A549 (cell line): ENCODE measurements at regions of chr5 and their contacts with region 1.

Region 1: GRCh38 chr5:172707285-172708182 is 63.5 kb downstream of the DUSP1 start:
- DNase-seq: peak; percentile 66 to 84
- ATAC-seq: peak; percentile 98 to 99
- H3K4me3 ChIP-seq: peak overlapping the region; percentile 33
- H3K27ac ChIP-seq: peak overlapping the region; percentile 80 to 83
- H3K4me1 ChIP-seq: peaks cover 11% of the 10 kb centered on the region
- CTCF ChIP-seq: peak; percentile 87
- EP300 ChIP-seq: no peak
- POLR2A ChIP-seq: no peak
- RAD21 ChIP-seq: peak; percentile 96 to 97

Region 2: DNA sequence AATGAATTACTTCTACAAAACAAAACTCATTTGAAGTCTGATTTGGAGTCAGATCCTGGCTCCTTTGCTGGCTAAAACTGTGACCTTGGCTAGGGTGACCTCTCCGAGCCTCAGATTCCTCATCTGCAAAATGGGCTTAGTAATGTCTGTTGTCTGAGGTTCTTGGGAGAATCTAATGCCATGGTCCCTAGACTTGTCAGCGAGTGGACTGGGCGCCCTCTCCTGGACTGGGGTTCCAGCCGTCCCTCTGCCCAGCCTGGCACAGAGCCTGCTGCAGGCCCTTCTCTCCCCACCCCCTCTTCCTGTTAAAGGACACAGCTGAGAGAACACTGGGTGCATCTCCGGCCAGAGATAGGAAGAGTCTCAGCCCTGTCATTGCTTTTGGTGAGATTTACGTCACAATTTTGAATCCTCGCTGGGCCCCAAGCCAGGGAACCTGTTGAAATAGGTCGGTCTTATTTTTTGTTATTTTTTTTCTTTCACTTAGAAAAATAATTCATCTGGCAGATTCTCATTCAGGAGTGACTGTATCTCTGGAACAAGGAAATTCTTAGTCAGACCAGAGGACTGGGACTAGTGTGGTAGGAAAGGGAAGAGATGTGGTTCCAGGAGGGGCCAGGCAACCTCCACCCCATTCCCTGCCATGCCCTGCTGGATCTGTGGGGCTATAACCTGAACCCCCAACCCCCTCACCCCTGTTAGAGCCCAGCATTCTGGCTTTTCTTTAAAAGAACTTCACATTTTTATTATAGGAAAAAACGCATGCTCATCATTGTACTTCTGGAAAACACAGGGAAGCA is 203.5 kb after region 1 on chr5:
- CTCF ChIA-PET with region 1: interaction called, 99 read pairs
- POLR2A ChIA-PET with region 1: interaction called, 3 read pairs
- DNase-seq: peak; percentile 67 to 96
- ATAC-seq: peak; percentile 85 to 91
- H3K4me3 ChIP-seq: no peak overlapping the region
- H3K27ac ChIP-seq: peak overlapping the region; percentile 98 to 100
- H3K4me1 ChIP-seq: peaks cover 68% of the 10 kb centered on the region
- CTCF ChIP-seq: peak; percentile 70
- EP300 ChIP-seq: peak; percentile 98 to 99
- POLR2A ChIP-seq: no peak
- RAD21 ChIP-seq: peak; percentile 82 to 87

Region 3: DNA sequence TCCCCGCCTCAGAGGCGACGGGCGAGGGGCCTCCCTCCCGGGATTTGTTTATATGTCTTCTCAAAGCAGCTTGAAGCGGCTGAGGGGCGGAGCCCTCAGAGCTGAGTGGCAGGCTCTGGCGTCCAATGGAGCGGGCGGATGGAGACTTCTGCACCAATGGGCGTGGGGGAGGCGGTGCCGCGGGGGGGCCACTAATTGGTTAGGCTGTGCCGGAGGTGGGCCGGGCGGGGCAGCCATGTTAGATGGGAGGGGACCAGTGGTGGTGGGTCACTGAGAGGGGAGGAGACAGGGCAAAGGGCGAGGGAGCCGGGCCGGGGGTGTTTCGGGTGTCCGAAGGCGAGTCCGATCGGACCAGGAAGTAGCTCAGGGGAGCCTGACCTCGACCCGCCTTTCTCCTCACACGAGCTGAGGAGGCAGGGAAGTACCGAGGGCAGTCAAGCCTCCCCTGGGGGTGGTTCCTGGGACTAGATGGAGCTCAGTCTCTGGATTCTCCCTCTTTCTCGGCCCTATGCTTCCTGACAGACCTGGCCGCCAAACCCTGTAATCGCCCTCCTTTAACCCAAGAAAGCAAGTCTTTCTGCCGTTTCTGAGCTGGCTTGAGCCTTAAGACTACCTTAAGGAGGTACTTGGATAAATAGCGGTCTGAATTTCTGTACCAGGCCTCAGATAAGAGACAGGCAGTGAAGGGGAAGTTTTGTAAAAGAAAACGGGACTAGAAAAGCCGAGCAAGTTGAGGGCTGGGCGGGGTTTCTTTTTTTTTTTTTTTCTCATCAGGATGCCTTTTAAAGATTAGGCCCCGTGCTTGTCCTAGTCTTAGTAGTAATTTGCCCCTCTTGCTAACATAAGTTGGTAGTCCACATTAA is 349.8 kb after region 1 on chr5:
- CTCF ChIA-PET with region 1: interaction called, 10 read pairs
- POLR2A ChIA-PET with region 1: no interaction called
- DNase-seq: peak; percentile 99
- ATAC-seq: peak; percentile 89 to 93
- H3K4me3 ChIP-seq: peak overlapping the region; percentile 93
- H3K27ac ChIP-seq: peak overlapping the region; percentile 86 to 90
- H3K4me1 ChIP-seq: peaks cover 17% of the 10 kb centered on the region; the same call in 2 of the 3 replicates
- CTCF ChIP-seq: no peak
- EP300 ChIP-seq: no peak
- POLR2A ChIP-seq: peak; percentile 60
- RAD21 ChIP-seq: no peak

Region 4: DNA sequence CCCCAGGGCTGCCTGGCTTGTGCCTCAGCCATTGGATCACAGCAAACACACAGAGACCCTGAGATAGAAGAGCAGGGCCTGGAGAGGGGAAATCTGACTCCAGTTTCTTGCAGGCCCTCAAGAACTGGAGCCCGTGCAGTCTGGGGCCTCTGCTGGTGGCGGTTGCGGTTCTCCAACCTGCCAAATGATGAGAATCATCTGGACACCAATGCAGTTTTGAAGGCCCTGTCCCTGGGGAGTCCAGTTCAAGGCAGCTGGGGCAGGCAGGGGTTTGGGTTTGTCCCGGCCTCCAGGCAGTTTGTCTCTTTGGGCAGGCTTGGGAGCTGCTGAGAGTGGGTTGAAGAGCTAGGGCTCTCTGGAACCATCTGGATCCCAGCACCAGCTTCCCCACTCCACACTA is 520.1 kb after region 1 on chr5:
- CTCF ChIA-PET with region 1: interaction called, 10 read pairs
- POLR2A ChIA-PET with region 1: no interaction called
- DNase-seq: no peak
- ATAC-seq: no peak
- H3K4me3 ChIP-seq: no peak overlapping the region
- H3K27ac ChIP-seq: no peak overlapping the region
- H3K4me1 ChIP-seq: no peaks in the 10 kb centered on the region
- CTCF ChIP-seq: no peak
- EP300 ChIP-seq: no peak
- POLR2A ChIP-seq: no peak
- RAD21 ChIP-seq: no peak

Region 5: DNA sequence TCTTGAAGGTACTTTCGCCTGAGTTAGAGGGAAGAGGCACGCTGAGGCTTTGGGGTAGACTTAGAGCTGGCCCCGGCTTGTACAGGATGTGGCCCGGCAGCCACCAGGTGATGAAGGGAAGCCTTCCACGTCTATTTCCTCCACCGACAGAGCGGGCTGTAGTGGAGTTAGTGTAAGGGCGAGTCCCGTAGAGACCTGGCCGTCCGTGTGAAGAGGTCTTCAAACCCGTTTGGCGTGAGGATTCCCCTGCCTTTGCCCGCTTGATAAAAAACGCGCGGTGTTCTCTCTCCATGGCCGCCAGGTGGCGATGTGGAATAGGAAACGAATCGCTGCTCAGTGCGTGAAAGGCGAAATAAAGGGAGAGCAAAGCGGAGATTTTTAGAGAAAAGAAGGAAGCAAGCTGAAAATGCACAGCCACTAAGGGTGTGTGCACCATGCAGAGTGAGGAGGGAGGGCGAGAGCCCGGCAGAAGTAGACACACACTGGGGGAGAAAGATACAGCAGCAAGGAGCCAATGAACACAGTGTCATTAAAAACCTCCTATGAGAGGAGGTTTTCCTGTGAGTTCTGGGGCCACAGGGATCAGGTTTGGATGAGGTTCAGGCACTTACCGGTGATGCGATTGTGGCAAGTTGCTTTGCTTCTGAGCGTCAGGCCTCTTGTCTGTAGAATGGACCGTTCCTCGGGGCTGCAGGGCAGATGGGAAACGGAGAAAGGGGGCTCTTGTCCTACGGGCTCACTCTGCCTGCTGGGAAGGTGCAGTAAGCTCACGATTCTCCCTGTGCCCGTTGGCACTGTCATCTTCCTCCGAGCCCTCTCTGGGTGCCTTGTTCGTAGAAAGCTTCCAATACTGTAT is 586.5 kb after region 1 on chr5:
- CTCF ChIA-PET with region 1: interaction called, 19 read pairs
- POLR2A ChIA-PET with region 1: no interaction called
- DNase-seq: peak; percentile 75 to 78
- ATAC-seq: peak; percentile 75 to 94
- H3K4me3 ChIP-seq: peak overlapping the region; percentile 18; the same call in 2 of the 3 replicates
- H3K27ac ChIP-seq: peak overlapping the region; percentile 60 to 74; a peak in 5 of 6 replicates
- H3K4me1 ChIP-seq: peaks cover 3% of the 10 kb centered on the region; the same call in 1 of the 3 replicates
- CTCF ChIP-seq: peak; percentile 96
- EP300 ChIP-seq: no peak
- POLR2A ChIP-seq: no peak
- RAD21 ChIP-seq: peak; percentile 98 to 99

Region 6: DNA sequence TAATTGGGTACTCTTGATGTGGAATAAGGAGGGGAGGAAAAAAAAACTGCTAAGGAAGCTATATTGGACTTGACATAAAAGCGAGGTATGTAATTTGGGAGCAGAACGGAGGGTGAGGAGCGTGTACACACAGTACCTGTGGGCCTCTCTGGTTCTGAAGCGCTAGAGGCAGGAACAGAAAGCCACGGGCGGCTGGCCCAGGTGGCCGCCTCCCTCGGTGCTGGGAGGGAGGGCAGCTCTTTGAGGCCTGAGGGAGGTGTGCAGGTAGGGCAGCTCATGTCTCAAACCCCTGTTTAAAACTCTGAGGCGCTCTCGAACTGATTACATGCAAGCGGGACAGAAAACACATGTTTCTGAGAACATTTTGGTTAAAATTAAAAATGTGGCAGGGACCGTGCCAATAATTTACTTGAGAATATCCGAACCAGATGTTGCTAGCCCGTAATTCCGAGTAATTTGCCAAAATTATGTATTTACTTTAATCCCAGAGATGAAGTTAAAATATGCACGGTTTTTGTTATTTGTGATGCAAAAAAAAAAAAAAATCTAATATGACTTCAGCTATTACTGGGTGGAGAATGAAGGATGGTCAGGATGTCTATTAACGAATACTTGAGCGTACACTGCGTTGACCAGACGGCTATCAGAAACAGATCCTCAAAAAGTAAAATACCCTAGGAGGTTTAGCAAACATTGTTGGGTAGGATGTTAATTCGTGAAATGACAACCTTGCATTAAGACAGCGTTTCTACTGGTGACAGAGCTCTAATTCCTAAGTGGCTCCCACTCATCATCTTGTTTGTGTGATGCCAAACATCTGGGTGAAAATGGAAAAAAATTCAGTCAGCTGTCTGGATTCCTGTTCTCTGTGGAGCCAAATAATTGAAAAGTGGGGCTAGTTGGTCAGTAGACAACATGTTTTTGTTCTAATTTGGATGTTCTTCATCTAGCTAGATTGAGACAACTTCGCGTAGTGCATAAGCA is 645.1 kb after region 1 on chr5:
- CTCF ChIA-PET with region 1: no interaction called
- POLR2A ChIA-PET with region 1: no interaction called
- DNase-seq: no peak
- ATAC-seq: no peak
- H3K4me3 ChIP-seq: no peak overlapping the region
- H3K27ac ChIP-seq: no peak overlapping the region
- H3K4me1 ChIP-seq: no peaks in the 10 kb centered on the region
- CTCF ChIP-seq: no peak
- EP300 ChIP-seq: no peak
- POLR2A ChIP-seq: no peak
- RAD21 ChIP-seq: no peak

Region 7: GRCh38 chr5:174549254-174549653 is 1841.7 kb after region 1 on chr5:
- CTCF ChIA-PET with region 1: no interaction called
- POLR2A ChIA-PET with region 1: no interaction called
- DNase-seq: no peak
- ATAC-seq: no peak
- H3K4me3 ChIP-seq: no peak overlapping the region
- H3K27ac ChIP-seq: no peak overlapping the region
- H3K4me1 ChIP-seq: no peaks in the 10 kb centered on the region
- CTCF ChIP-seq: no peak
- EP300 ChIP-seq: no peak
- POLR2A ChIP-seq: no peak
- RAD21 ChIP-seq: no peak